ENCODE measurements at regions of chr3 and their contacts with region 1.

Region 1: GRCh38 chr3:12853191-12853741 is 11.9 kb upstream of the RPL32 start:
- DNase-seq: no peak
- ATAC-seq: no peak
- H3K4me3 ChIP-seq: no peak overlapping the region
- H3K4me3 Mint-ChIP-seq: no peak overlapping the region
- H3K27ac ChIP-seq: no peak overlapping the region
- H3K27ac Mint-ChIP-seq: no peak overlapping the region
- H3K4me1 ChIP-seq: no peaks in the 10 kb centered on the region
- H3K4me1 Mint-ChIP-seq: no peaks in the 10 kb centered on the region
- H3K27me3 ChIP-seq: no peaks in the 10 kb centered on the region
- H3K27me3 Mint-ChIP-seq: peaks cover 17% of the 10 kb centered on the region
- CTCF ChIP-seq: no peak

Region 2: GRCh38 chr3:11288786-11289682 is 1564.2 kb before region 1 on chr3:
- CTCF ChIA-PET with region 1: no interaction called
- POLR2A ChIA-PET with region 1: no interaction called
- intact Hi-C with region 1: no loop called
- DNase-seq: peak in 3 of 14 experiments; percentile 45 to 75 (median 69)
- ATAC-seq: peak; percentile 12
- H3K4me3 ChIP-seq: no peak overlapping the region
- H3K4me3 Mint-ChIP-seq: peak overlapping the region; percentile 12
- H3K27ac ChIP-seq: peak overlapping the region in 1 of 2 donors; percentile 38
- H3K27ac Mint-ChIP-seq: peak overlapping the region; percentile 88
- H3K4me1 ChIP-seq: peaks cover 35% of the 10 kb centered on the region
- H3K4me1 Mint-ChIP-seq: peaks cover 64% of the 10 kb centered on the region
- H3K27me3 ChIP-seq: no peaks in the 10 kb centered on the region
- H3K27me3 Mint-ChIP-seq: no peaks in the 10 kb centered on the region
- CTCF ChIP-seq: no peak

Region 3: DNA sequence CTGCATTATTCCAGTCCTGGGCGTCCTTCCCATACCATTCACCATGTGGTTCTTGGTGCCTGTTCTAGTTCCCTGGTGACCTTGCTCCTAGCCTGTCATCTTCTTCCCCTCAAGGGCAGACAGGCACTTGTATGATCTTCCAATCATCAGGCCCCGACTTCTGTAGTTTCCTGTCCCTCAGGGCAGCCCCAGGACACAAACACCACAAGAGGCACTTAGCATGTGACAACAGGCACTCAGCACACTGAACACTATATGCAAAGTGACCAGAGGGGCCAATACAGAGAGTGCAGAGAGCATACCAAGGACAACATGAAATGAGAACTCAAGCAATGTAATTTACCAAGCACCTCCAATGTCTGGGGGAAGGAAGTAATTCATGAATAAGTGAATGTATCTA is 112.1 kb before region 1 on chr3:
- CTCF ChIA-PET with region 1: no interaction called
- POLR2A ChIA-PET with region 1: no interaction called
- intact Hi-C with region 1: no loop called
- DNase-seq: no peak
- ATAC-seq: no peak
- H3K4me3 ChIP-seq: no peak overlapping the region
- H3K4me3 Mint-ChIP-seq: no peak overlapping the region
- H3K27ac ChIP-seq: no peak overlapping the region
- H3K27ac Mint-ChIP-seq: no peak overlapping the region
- H3K4me1 ChIP-seq: no peaks in the 10 kb centered on the region
- H3K4me1 Mint-ChIP-seq: no peaks in the 10 kb centered on the region
- H3K27me3 ChIP-seq: peaks cover under 1 to 2% of the 10 kb centered on the region in 2 experiments
- H3K27me3 Mint-ChIP-seq: no peaks in the 10 kb centered on the region
- CTCF ChIP-seq: no peak

Region 4: DNA sequence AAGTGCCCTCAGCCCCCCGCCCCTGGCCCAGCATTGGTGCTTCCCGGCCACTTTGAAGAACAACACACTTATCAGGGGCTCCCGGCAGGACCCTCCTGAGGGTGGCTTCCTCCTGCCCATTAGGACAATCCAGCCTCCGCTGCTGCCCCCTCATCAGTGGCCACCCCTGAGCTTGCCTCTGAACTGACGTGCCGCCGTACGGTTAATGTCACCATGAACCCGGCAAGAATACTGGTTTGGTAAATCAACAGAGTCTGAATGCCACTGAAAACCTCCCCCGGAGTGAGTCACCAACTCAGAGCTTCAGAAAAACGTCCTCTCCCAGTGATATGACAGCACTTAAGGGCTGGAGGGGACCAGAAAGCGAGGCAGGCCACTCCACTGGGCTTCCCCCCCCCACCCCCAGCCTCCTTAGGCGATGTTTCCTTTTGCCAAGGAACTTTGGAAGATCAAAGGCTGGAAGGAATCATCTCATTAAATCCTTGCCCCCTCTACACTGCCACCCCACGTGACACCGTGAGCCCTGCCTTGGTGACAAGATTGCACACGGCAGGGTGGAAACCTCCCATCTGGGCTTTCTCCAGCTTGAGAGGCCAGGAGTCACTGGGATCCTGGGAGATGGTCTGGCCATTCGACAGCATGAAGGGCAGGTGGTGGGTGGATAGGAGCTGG is 424.7 kb after region 1 on chr3:
- CTCF ChIA-PET with region 1: no interaction called
- POLR2A ChIA-PET with region 1: no interaction called
- intact Hi-C with region 1: loop called in 1 of 2 experiments (anchors 10 kb)
- DNase-seq: no peak
- ATAC-seq: no peak
- H3K4me3 ChIP-seq: no peak overlapping the region
- H3K4me3 Mint-ChIP-seq: no peak overlapping the region
- H3K27ac ChIP-seq: no peak overlapping the region
- H3K27ac Mint-ChIP-seq: no peak overlapping the region
- H3K4me1 ChIP-seq: peaks cover 11% of the 10 kb centered on the region
- H3K4me1 Mint-ChIP-seq: peaks cover 7% of the 10 kb centered on the region
- H3K27me3 ChIP-seq: peaks cover 11% of the 10 kb centered on the region in 2 experiments
- H3K27me3 Mint-ChIP-seq: peaks cover 31% of the 10 kb centered on the region
- CTCF ChIP-seq: no peak